ENCODE measurements at regions of chr7 and their contacts with region 1.

Region 1: GRCh38 chr7:148575640-148576411 is 14.7 kb upstream of the C7orf33 start:
- DNase-seq: peak; percentile 71
- H3K4me3 ChIP-seq: no peak overlapping the region
- H3K27ac ChIP-seq: no peak overlapping the region
- H3K4me1 ChIP-seq: no peaks in the 10 kb centered on the region
- H3K27me3 ChIP-seq: no peaks in the 10 kb centered on the region
- CTCF ChIP-seq: peak; percentile 81 to 82
- POLR2A ChIP-seq: no peak

Region 2: GRCh38 chr7:148503875-148504487 is 71.8 kb before region 1 on chr7:
- CTCF ChIA-PET with region 1: no interaction called
- POLR2A ChIA-PET with region 1: no interaction called
- dilution Hi-C with region 1: no loop called
- intact Hi-C with region 1: loop called (anchors 1 kb)
- DNase-seq: peak; percentile 41
- H3K4me3 ChIP-seq: no peak overlapping the region
- H3K27ac ChIP-seq: no peak overlapping the region
- H3K4me1 ChIP-seq: no peaks in the 10 kb centered on the region
- H3K27me3 ChIP-seq: peaks cover 0 to 2% of the 10 kb centered on the region in 2 experiments
- CTCF ChIP-seq: peak; percentile 36 to 37
- POLR2A ChIP-seq: no peak

Region 3: GRCh38 chr7:148547951-148548350 is 27.9 kb before region 1 on chr7:
- CTCF ChIA-PET with region 1: no interaction called
- POLR2A ChIA-PET with region 1: no interaction called
- dilution Hi-C with region 1: no loop called
- intact Hi-C with region 1: no loop called
- DNase-seq: no peak
- H3K4me3 ChIP-seq: no peak overlapping the region
- H3K27ac ChIP-seq: no peak overlapping the region
- H3K4me1 ChIP-seq: no peaks in the 10 kb centered on the region
- H3K27me3 ChIP-seq: no peaks in the 10 kb centered on the region
- CTCF ChIP-seq: no peak
- POLR2A ChIP-seq: no peak

Region 4: DNA sequence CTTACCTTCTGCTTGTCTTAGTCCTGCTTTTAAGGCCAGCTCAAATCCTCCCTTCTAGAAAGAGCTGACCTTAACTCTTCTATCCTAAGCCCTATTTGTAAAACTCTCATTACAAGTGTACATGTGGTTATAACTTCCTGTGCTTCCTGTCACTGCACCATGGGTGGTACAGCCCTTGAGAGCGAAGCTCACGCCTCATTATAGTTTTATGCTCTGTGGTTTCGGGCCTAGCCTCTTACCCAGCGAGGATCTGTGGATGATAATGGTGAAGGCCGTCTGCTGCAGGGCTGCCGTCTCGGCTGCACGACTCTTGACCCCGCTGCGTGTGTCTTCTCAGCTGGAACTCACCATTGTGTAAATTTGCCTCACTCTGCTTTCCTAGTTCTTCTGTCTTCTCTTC is 197.5 kb after region 1 on chr7:
- CTCF ChIA-PET with region 1: interaction called, 7 read pairs
- POLR2A ChIA-PET with region 1: no interaction called
- dilution Hi-C with region 1: no loop called
- intact Hi-C with region 1: loop called (anchors 10 kb)
- DNase-seq: no peak
- H3K4me3 ChIP-seq: no peak overlapping the region
- H3K27ac ChIP-seq: peak overlapping the region; percentile 47
- H3K4me1 ChIP-seq: peaks cover 10% of the 10 kb centered on the region
- H3K27me3 ChIP-seq: no peaks in the 10 kb centered on the region
- CTCF ChIP-seq: no peak
- POLR2A ChIP-seq: no peak